Colonic mucosa (tissue), 4 donors: ENCODE measurements at regions of chr1 and their contacts with region 1.

Region 1: GRCh38 chr1:58816072-58816746 is 32.4 kb upstream of the JUN start:
- DNase-seq: peak; percentile 93
- H3K4me3 ChIP-seq: peak overlapping the region; percentile 45
- H3K27ac ChIP-seq: peak overlapping the region; percentile 93
- H3K4me1 ChIP-seq: peaks cover 6% of the 10 kb centered on the region
- H3K27me3 ChIP-seq: no peaks in the 10 kb centered on the region
- CTCF ChIP-seq: no peak

Region 2: DNA sequence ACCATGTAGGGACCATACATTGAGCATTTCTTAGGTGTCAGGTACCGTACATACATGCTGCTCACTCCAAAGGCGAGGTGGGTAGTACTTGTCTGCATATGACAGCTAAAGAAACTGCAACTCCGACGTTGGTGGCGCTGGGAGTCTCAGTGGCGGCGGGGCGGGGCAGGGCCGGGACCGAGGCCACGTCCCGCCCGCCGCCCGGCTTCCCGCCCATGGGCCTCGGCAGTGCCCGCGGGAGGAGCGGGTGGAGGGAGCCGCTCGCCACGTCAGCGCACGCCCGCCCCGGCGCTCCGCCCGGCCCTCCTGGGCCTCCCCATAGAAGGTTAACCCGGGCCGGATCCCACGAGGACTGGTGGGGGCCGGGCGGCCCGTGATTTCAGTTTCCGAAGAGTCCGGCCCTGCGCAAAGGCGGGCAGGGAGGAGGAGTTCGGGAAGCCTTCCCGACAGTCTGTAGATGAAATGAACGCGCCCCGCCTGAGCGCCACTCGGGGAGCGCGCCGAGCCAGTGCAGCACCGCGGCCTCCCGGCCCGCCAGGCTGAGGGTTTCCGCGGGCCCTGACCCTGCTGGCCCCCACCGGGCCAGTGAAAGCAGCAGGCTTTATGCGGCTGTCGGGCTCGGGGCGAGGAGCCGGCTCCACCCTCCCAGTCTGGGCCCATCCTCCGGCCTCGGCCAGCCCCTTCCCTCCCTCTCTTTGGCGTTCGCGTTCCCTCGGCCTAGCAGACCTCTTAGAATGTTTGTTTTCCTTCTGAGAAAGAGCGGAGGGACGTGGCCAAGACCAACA is 87.5 kb after region 1 on chr1:
- intact Hi-C with region 1: loop called (anchors 5 kb)
- DNase-seq: peak; percentile 93
- H3K4me3 ChIP-seq: peak overlapping the region; percentile 41
- H3K27ac ChIP-seq: peak overlapping the region; percentile 97
- H3K4me1 ChIP-seq: peaks cover 9% of the 10 kb centered on the region
- H3K27me3 ChIP-seq: no peaks in the 10 kb centered on the region
- CTCF ChIP-seq: no peak